Activated CD4-positive, alpha-beta memory T cell treated with anti-CD3 and anti-CD28 coated beads for 36 hours (primary cell): ENCODE measurements at regions of chr2 and their contacts with region 1.

Region 1: GRCh38 chr2:204967199-204967960 is 422.1 kb downstream of the PARD3B start:
- DNase-seq: peak; percentile 59
- H3K4me3 Mint-ChIP-seq: peak overlapping the region; percentile 21
- H3K27ac Mint-ChIP-seq: peak overlapping the region; percentile 83
- H3K4me1 Mint-ChIP-seq: peaks cover 56% of the 10 kb centered on the region
- H3K27me3 Mint-ChIP-seq: no peaks in the 10 kb centered on the region

Region 2: GRCh38 chr2:204871231-204871953 is 96.0 kb before region 1 on chr2:
- CTCF ChIA-PET with region 1: no interaction called
- POLR2A ChIA-PET with region 1: no interaction called
- intact Hi-C with region 1: loop called (anchors 2 kb)
- DNase-seq: no peak
- H3K4me3 Mint-ChIP-seq: no peak overlapping the region
- H3K27ac Mint-ChIP-seq: no peak overlapping the region
- H3K4me1 Mint-ChIP-seq: peaks cover 16% of the 10 kb centered on the region
- H3K27me3 Mint-ChIP-seq: no peaks in the 10 kb centered on the region

Region 3: GRCh38 chr2:204913854-204914464 is 53.4 kb before region 1 on chr2:
- CTCF ChIA-PET with region 1: no interaction called
- POLR2A ChIA-PET with region 1: no interaction called
- intact Hi-C with region 1: loop called (anchors 1 kb)
- DNase-seq: no peak
- H3K4me3 Mint-ChIP-seq: no peak overlapping the region
- H3K27ac Mint-ChIP-seq: no peak overlapping the region
- H3K4me1 Mint-ChIP-seq: peaks cover 2% of the 10 kb centered on the region
- H3K27me3 Mint-ChIP-seq: no peaks in the 10 kb centered on the region

Region 4: GRCh38 chr2:204948024-204948763 is 19.2 kb before region 1 on chr2:
- CTCF ChIA-PET with region 1: no interaction called
- POLR2A ChIA-PET with region 1: no interaction called
- intact Hi-C with region 1: loop called (anchors 1 kb)
- DNase-seq: no peak
- H3K4me3 Mint-ChIP-seq: no peak overlapping the region
- H3K27ac Mint-ChIP-seq: peak overlapping the region; percentile 58
- H3K4me1 Mint-ChIP-seq: peaks cover 36% of the 10 kb centered on the region
- H3K27me3 Mint-ChIP-seq: no peaks in the 10 kb centered on the region

Region 5: DNA sequence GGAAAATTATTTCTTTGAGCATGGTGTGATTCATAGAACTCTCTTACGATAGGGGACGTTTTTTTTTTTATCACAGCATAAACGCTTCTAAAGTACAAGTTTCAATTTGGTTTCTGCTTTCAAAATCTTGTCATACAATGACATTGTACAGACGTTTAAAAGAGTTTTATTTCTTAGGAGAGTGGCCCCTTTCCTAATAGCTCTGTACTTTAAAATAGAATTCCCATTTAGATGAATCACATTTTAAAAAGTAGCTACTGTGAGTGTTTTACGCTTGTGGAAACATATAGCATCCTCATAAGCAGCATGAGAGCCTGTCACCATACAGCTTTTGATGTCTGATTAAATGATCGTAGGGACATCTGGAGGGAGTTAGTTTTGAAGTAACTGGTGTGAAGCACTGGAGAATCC is 88.8 kb after region 1 on chr2:
- CTCF ChIA-PET with region 1: no interaction called
- POLR2A ChIA-PET with region 1: no interaction called
- intact Hi-C with region 1: loop called (anchors 5 kb)
- DNase-seq: no peak
- H3K4me3 Mint-ChIP-seq: peak overlapping the region; percentile 55
- H3K27ac Mint-ChIP-seq: no peak overlapping the region
- H3K4me1 Mint-ChIP-seq: peaks cover 14% of the 10 kb centered on the region
- H3K27me3 Mint-ChIP-seq: no peaks in the 10 kb centered on the region

Region 6: DNA sequence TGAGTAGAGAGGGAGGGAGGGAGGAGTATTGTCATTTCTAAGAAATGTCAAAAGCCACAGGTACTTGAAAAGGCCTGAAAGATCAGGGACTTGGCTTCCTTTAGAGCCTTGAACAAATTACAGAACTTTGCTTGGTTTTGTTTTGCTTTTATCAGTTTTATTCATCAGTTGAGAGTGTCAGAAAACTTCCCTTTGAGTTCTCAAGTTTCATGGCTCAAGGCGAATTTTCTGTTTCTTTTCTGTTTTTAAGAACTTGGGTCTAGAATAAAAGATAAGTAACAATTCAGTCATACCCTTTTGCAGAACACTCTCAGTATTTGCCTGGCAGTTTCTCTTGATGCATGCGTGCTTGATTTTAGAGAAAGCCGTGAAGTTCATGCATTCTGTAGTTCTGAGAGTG is 109.8 kb after region 1 on chr2:
- CTCF ChIA-PET with region 1: no interaction called
- POLR2A ChIA-PET with region 1: no interaction called
- intact Hi-C with region 1: loop called (anchors 2 kb)
- DNase-seq: peak; percentile 11
- H3K4me3 Mint-ChIP-seq: no peak overlapping the region
- H3K27ac Mint-ChIP-seq: peak overlapping the region; percentile 43
- H3K4me1 Mint-ChIP-seq: peaks cover 40% of the 10 kb centered on the region
- H3K27me3 Mint-ChIP-seq: no peaks in the 10 kb centered on the region